Common myeloid progenitor, CD34-positive (primary cell): ENCODE measurements at regions of chr10 and their contacts with region 1.

Region 1: GRCh38 chr10:99435986-99436638 is 5.7 kb upstream of the GOT1 start:
- DNase-seq: peak; percentile 67 to 85 (median 79)
- H3K4me3 ChIP-seq: peak overlapping the region in 1 of 7 experiments; percentile 46
- H3K27ac ChIP-seq: peak overlapping the region in 1 of 2 experiments; percentile 22
- H3K4me1 ChIP-seq: peaks cover 0 to 17% (median 9%) of the 10 kb centered on the region in 4 experiments
- H3K27me3 ChIP-seq: no peaks in the 10 kb centered on the region

Region 2: GRCh38 chr10:99304862-99305229 is 131.3 kb before region 1 on chr10:
- CTCF ChIA-PET with region 1: no interaction called
- POLR2A ChIA-PET with region 1: no interaction called
- DNase-seq: no peak
- H3K4me3 ChIP-seq: no peak overlapping the region
- H3K27ac ChIP-seq: no peak overlapping the region
- H3K4me1 ChIP-seq: no peaks in the 10 kb centered on the region
- H3K27me3 ChIP-seq: peaks cover 0 to 2% (median 0%) of the 10 kb centered on the region in 5 experiments

Region 3: GRCh38 chr10:99403674-99404073 is 32.4 kb before region 1 on chr10:
- CTCF ChIA-PET with region 1: interaction called, 16 read pairs
- POLR2A ChIA-PET with region 1: no interaction called
- DNase-seq: peak; percentile 36 to 77 (median 65)
- H3K4me3 ChIP-seq: no peak overlapping the region
- H3K27ac ChIP-seq: no peak overlapping the region
- H3K4me1 ChIP-seq: peaks cover 0 to 12% (median 7%) of the 10 kb centered on the region in 4 experiments
- H3K27me3 ChIP-seq: no peaks in the 10 kb centered on the region

Region 4: GRCh38 chr10:99450624-99451498 is 14.7 kb after region 1 on chr10:
- CTCF ChIA-PET with region 1: interaction called, 13 read pairs
- POLR2A ChIA-PET with region 1: no interaction called
- DNase-seq: no peak
- H3K4me3 ChIP-seq: no peak overlapping the region
- H3K27ac ChIP-seq: no peak overlapping the region
- H3K4me1 ChIP-seq: peaks cover 0 to 3% (median 1%) of the 10 kb centered on the region in 4 experiments
- H3K27me3 ChIP-seq: peaks cover 0 to 2% (median 0%) of the 10 kb centered on the region in 5 experiments

Region 5: DNA sequence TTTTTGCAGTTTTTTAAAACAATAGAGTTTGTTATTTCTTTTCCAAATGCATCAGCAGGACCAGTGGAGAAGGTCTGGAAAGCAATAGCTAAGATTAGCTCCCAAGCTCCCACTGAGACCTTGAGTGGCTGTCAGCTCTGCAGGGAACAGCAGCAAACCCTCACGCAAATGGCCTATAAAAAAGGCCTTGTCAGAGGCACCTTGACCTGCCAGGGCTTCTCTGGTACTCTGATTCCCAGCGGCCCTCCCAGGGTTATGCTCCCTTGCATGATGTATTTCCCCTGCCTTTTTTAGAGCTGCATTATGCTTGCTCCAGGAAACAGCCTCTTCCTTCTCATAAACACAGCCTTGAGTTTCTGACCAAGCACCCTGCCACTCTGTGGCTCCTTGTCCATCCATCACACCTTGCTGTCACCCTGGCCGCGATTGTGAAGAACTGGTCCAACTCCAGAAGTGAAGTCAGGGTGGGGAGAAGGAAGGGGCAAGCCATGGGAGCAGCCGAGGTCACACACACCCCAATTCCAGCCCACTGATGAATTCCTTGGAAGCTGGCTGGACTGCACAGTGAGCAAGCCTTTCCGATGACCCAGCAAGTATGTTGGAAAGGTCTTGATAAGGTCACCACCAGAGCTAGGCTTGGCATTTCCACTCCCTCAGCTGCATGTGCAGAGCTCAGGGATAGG is 61.4 kb after region 1 on chr10:
- CTCF ChIA-PET with region 1: no interaction called
- POLR2A ChIA-PET with region 1: no interaction called
- DNase-seq: no peak
- H3K4me3 ChIP-seq: no peak overlapping the region
- H3K27ac ChIP-seq: no peak overlapping the region
- H3K4me1 ChIP-seq: no peaks in the 10 kb centered on the region
- H3K27me3 ChIP-seq: peaks cover 0 to 5% (median 0%) of the 10 kb centered on the region in 5 experiments

Region 6: GRCh38 chr10:99520040-99520846 is 84.1 kb after region 1 on chr10:
- CTCF ChIA-PET with region 1: interaction called, 10 read pairs
- POLR2A ChIA-PET with region 1: no interaction called
- DNase-seq: peak; percentile 81 to 92 (median 84)
- H3K4me3 ChIP-seq: peak overlapping the region; percentile 46 to 77 (median 61)
- H3K27ac ChIP-seq: peak overlapping the region in 1 of 2 experiments; percentile 43
- H3K4me1 ChIP-seq: peaks cover 0 to 45% (median 31%) of the 10 kb centered on the region in 4 experiments
- H3K27me3 ChIP-seq: no peaks in the 10 kb centered on the region

Region 7: GRCh38 chr10:99548041-99548530 is 112.0 kb after region 1 on chr10:
- CTCF ChIA-PET with region 1: interaction called, 94 read pairs
- POLR2A ChIA-PET with region 1: no interaction called
- DNase-seq: peak in 2 of 3 donors; percentile 74
- H3K4me3 ChIP-seq: no peak overlapping the region
- H3K27ac ChIP-seq: no peak overlapping the region
- H3K4me1 ChIP-seq: peaks cover 0 to 15% (median 13%) of the 10 kb centered on the region in 4 experiments
- H3K27me3 ChIP-seq: peaks cover 0 to 2% (median 0%) of the 10 kb centered on the region in 5 experiments

Region 8: GRCh38 chr10:99711129-99711719 is 275.1 kb after region 1 on chr10:
- CTCF ChIA-PET with region 1: interaction called, 21 read pairs
- POLR2A ChIA-PET with region 1: no interaction called
- DNase-seq: peak; percentile 80 to 92 (median 87)
- H3K4me3 ChIP-seq: no peak overlapping the region
- H3K27ac ChIP-seq: no peak overlapping the region
- H3K4me1 ChIP-seq: peaks cover 0 to 21% (median 11%) of the 10 kb centered on the region in 4 experiments
- H3K27me3 ChIP-seq: no peaks in the 10 kb centered on the region